ENCODE measurements at regions of chr5 and their contacts with region 1.

Region 1: GRCh38 chr5:10934783-10935355 is 173.8 kb upstream of the DAP start:
- DNase-seq: no peak
- H3K4me3 ChIP-seq: no peak overlapping the region
- H3K27ac ChIP-seq: no peak overlapping the region
- H3K4me1 ChIP-seq: no peaks in the 10 kb centered on the region
- H3K27me3 ChIP-seq: no peaks in the 10 kb centered on the region
- CTCF ChIP-seq: no peak

Region 2: GRCh38 chr5:10220243-10220642 is 714.6 kb before region 1 on chr5:
- CTCF ChIA-PET with region 1: no interaction called
- POLR2A ChIA-PET with region 1: no interaction called
- intact Hi-C with region 1: no loop called
- DNase-seq: no peak
- H3K4me3 ChIP-seq: no peak overlapping the region
- H3K27ac ChIP-seq: no peak overlapping the region
- H3K4me1 ChIP-seq: no peaks in the 10 kb centered on the region
- H3K27me3 ChIP-seq: no peaks in the 10 kb centered on the region
- CTCF ChIP-seq: no peak

Region 3: DNA sequence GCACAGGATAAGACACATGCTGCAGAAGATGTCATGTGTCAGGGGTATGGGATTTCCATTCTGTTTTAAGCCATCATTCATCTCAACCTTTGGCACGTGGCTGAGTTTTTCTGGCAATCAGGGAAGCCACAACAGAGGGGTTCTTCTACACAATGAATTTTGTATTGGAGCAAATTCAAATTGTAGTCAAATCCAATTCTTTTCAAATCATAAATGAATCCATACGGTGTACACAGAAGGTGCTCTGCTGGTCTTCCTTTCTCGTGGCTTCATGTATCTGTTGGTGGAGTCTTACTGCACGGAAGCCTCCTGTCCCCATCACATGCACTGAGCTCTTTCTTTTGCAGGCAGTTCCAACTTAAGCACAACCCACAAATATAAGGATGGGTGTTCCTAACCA is 262.9 kb after region 1 on chr5:
- CTCF ChIA-PET with region 1: no interaction called
- POLR2A ChIA-PET with region 1: no interaction called
- intact Hi-C with region 1: no loop called
- DNase-seq: no peak
- H3K4me3 ChIP-seq: no peak overlapping the region
- H3K27ac ChIP-seq: no peak overlapping the region
- H3K4me1 ChIP-seq: no peaks in the 10 kb centered on the region
- H3K27me3 ChIP-seq: no peaks in the 10 kb centered on the region
- CTCF ChIP-seq: no peak

Region 4: GRCh38 chr5:11227064-11227463 is 292.2 kb after region 1 on chr5:
- CTCF ChIA-PET with region 1: interaction called, 12 read pairs
- POLR2A ChIA-PET with region 1: no interaction called
- intact Hi-C with region 1: no loop called
- DNase-seq: no peak
- H3K4me3 ChIP-seq: no peak overlapping the region
- H3K27ac ChIP-seq: no peak overlapping the region
- H3K4me1 ChIP-seq: no peaks in the 10 kb centered on the region
- H3K27me3 ChIP-seq: no peaks in the 10 kb centered on the region
- CTCF ChIP-seq: no peak

Measured in A673 (cell line).